GM10248 (cell line): ENCODE measurements at regions of chr13 and their contacts with region 1.

Region 1: DNA sequence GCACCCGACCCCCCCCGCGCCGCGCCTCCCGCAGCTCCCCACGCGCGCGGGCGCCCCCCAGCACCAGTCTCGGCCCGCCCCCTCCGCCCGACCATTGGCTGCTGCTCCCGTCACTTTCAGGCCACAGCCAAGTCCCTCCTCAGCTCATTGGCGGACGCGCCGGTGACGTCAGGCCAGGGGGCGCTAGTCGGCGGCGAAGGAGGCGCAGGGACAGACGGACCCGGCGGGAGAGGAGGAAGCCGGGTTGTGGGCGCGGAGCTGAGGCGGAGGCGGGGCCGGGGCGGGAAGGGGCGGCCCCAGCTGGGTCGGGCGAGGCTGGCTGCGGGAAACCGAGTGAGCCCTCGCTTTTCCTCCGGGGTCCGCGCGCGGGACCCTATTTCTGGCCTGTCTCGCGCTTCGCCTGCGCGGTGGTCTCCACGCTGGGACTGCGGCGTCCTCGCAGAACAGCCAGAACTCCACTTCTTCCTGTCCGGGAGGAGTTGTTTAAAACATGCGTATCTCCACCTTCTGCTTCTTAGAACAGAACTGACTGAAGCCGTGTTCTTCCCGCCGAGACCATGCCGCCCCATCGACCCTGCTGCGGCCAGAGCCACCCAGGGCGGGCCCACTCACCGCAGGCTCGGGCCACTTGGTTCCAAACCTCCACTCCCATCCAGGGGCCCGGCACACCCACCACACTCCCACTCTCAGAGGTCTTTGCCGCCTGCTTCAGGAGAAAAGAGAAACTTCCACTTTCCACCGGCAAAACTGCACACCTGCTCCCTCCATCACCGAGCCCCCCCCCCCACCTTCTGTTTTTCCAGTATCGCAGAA is 459 bp upstream of the TMTC4 start:
- DNase-seq: peak; percentile 99
- CTCF ChIP-seq: peak; percentile 57

Region 2: GRCh38 chr13:99406799-99407201 is 1268.3 kb before region 1 on chr13:
- CTCF ChIA-PET with region 1: no interaction called
- POLR2A ChIA-PET with region 1: no interaction called
- DNase-seq: no peak
- CTCF ChIP-seq: no peak

Region 3: GRCh38 chr13:100636441-100636840 is 38.6 kb before region 1 on chr13:
- CTCF ChIA-PET with region 1: no interaction called
- POLR2A ChIA-PET with region 1: no interaction called
- DNase-seq: no peak
- CTCF ChIP-seq: no peak

Region 4: DNA sequence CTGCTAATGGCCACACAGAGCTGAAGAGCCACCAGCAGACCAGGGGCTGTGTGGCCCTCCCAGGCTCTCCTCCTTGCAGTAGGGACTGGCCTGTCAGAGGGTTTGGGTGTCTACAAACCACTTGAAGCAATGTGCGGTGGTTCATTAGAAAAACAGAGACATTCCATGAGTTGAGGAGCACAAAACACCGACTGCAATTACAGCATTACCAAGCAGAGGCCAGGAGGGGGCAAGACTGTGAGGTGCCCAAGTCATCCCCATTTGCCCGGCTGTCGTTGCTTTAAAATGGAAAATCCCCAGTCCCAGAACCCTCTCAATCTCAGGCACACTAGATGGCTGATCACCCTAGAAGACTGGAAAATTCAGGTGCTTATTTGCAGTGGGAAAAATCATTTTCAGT is 15.5 kb before region 1 on chr13:
- CTCF ChIA-PET with region 1: interaction called, 10 read pairs
- POLR2A ChIA-PET with region 1: no interaction called
- DNase-seq: no peak
- CTCF ChIP-seq: no peak